ENCODE measurements at regions of chr16 and their contacts with region 1.

Region 1: GRCh38 chr16:19086322-19087199 is 19.1 kb downstream of the COQ7 start:
- DNase-seq: peak; percentile 95
- ATAC-seq: peak; percentile 98
- H3K4me3 ChIP-seq: peak overlapping the region; percentile 45 to 84 (median 47)
- H3K27ac ChIP-seq: no peak overlapping the region
- H3K4me1 ChIP-seq: peaks cover 15% of the 10 kb centered on the region
- H3K27me3 ChIP-seq: peaks cover 0 to 9% of the 10 kb centered on the region in 2 experiments; a peak in 2 of 5 replicates
- CTCF ChIP-seq: peak; percentile 100
- EP300 ChIP-seq: peak; percentile 28 to 80; a peak in 1 of 4 replicates
- POLR2A ChIP-seq: peak in 1 of 2 experiments; percentile 78; a peak in 2 of 4 replicates
- RAD21 ChIP-seq: peak; percentile 100

Region 2: GRCh38 chr16:19073863-19074262 is 12.7 kb before region 1 on chr16:
- CTCF ChIA-PET with region 1: no interaction called
- POLR2A ChIA-PET with region 1: no interaction called
- in situ Hi-C with region 1: no loop called
- intact Hi-C with region 1: no loop called
- DNase-seq: no peak
- ATAC-seq: no peak
- H3K4me3 ChIP-seq: no peak overlapping the region
- H3K27ac ChIP-seq: no peak overlapping the region
- H3K4me1 ChIP-seq: peaks cover 10% of the 10 kb centered on the region
- H3K27me3 ChIP-seq: no peaks in the 10 kb centered on the region
- CTCF ChIP-seq: no peak
- EP300 ChIP-seq: no peak
- POLR2A ChIP-seq: no peak
- RAD21 ChIP-seq: no peak

Region 3: DNA sequence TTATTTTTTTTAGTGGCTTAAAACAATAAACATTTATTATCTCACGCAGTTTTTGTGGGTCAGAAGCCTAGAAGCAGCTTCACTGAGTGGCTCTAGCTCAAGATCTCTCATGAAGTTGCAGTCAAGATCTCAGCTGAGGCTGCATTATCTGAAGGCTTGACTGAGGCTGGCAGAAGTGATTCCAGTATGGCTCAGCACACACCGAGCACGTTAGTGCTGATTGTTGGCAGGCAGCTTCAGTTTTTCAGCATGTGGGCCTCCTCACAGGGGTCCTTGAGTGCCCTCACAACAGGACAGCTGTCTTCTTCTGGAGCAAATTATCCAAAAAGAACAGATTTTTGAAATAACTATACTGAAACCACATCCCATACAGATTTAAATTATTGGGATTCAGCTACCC is 13.5 kb after region 1 on chr16:
- CTCF ChIA-PET with region 1: interaction called, 5 read pairs
- POLR2A ChIA-PET with region 1: interaction called, 15 read pairs
- in situ Hi-C with region 1: no loop called
- intact Hi-C with region 1: loop called (anchors 2 kb)
- DNase-seq: no peak
- ATAC-seq: no peak
- H3K4me3 ChIP-seq: no peak overlapping the region
- H3K27ac ChIP-seq: no peak overlapping the region
- H3K4me1 ChIP-seq: peaks cover 14% of the 10 kb centered on the region
- H3K27me3 ChIP-seq: peaks cover 2 to 12% of the 10 kb centered on the region in 2 experiments; a peak in 4 of 5 replicates
- CTCF ChIP-seq: no peak
- EP300 ChIP-seq: no peak
- POLR2A ChIP-seq: no peak
- RAD21 ChIP-seq: no peak

Region 4: GRCh38 chr16:19167710-19168370 is 81.3 kb after region 1 on chr16 and contains the start of gene SYT17:
- CTCF ChIA-PET with region 1: interaction called, 11 read pairs
- POLR2A ChIA-PET with region 1: no interaction called
- in situ Hi-C with region 1: no loop called
- intact Hi-C with region 1: no loop called
- DNase-seq: peak; percentile 60
- ATAC-seq: peak; percentile 94
- H3K4me3 ChIP-seq: peak within 1 kb of the TSS; percentile 25 to 65 (median 41); a peak in 4 of 6 replicates
- H3K27ac ChIP-seq: no peak within 1 kb of the TSS
- H3K4me1 ChIP-seq: no peaks in the 10 kb centered on the region
- H3K27me3 ChIP-seq: peaks cover 11 to 57% of the 10 kb centered on the region in 2 experiments; a peak in 4 of 5 replicates
- CTCF ChIP-seq: peak; percentile 82
- EP300 ChIP-seq: no peak
- POLR2A ChIP-seq: no peak
- RAD21 ChIP-seq: peak; percentile 97
- total RNA-seq, gene SYT17: 0.14 TPM in 1 of 2 replicates, not detected in the other

Region 5: DNA sequence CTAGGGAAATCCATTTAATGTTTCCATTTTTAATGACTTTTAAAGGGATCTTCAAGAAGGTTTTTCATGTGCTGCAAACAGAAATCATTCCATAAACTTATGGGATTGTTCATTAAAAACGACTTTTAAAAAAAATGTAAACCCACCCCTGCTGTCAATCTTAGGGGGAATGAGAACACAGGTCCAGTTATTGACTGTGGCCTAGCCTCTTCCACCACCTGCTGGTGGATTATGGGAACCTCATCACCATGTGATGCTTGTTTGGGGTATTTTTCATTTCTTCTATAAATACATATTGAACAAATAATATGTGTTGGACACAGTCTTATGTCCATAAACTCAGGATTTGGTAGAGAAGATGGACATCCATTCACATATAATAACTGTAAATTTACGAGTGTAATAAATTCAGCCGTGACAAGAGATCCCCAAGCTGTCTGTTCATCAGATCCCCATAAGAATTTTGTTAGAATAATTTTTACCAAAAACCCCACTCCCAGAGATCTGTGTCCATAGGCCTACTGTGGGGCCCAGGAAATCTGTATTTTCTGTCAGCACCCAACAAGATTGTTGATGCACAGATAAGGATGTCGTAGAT is 289.1 kb after region 1 on chr16:
- CTCF ChIA-PET with region 1: interaction called, 65 read pairs
- POLR2A ChIA-PET with region 1: no interaction called
- in situ Hi-C with region 1: loop called (anchors 5 kb)
- intact Hi-C with region 1: loop called (anchors 1 kb)
- DNase-seq: peak; percentile 60
- ATAC-seq: peak; percentile 83
- H3K4me3 ChIP-seq: no peak overlapping the region
- H3K27ac ChIP-seq: no peak overlapping the region
- H3K4me1 ChIP-seq: peaks cover 13% of the 10 kb centered on the region
- H3K27me3 ChIP-seq: 0 out of 5 replicates have a peak, but pooled peaks cover 1 to 4% of the 10 kb centered on the region in 2 experiments
- CTCF ChIP-seq: peak; percentile 92
- EP300 ChIP-seq: no peak
- POLR2A ChIP-seq: no peak
- RAD21 ChIP-seq: peak; percentile 90

Region 6: DNA sequence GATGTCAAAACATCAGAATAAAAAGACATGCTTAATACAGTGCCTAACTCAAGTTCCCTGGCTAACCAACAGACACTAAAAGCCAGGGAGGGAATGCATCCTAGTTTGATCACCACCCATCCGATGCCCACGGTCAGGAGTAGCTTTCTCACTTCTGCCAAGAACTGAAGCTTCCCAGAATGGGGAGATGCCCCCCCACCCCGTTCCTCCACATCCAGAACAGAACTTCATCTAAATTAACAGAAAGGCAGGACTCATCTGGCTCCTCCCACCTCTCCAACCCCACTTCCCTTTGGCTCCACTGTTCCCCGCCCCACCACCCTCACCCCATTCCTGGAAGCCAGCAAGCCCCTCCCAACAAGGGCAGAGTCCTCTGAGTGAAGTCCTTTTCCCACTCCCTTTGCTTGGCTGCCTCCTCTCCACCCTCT is 401.7 kb after region 1 on chr16:
- CTCF ChIA-PET with region 1: no interaction called
- POLR2A ChIA-PET with region 1: no interaction called
- in situ Hi-C with region 1: no loop called
- intact Hi-C with region 1: no loop called
- DNase-seq: no peak
- ATAC-seq: peak; percentile 68
- H3K4me3 ChIP-seq: peak overlapping the region in 1 of 3 experiments; percentile 25; a peak in 1 of 6 replicates
- H3K27ac ChIP-seq: no peak overlapping the region
- H3K4me1 ChIP-seq: peaks cover 14% of the 10 kb centered on the region
- H3K27me3 ChIP-seq: peaks cover 0 to 9% of the 10 kb centered on the region in 2 experiments; a peak in 1 of 5 replicates
- CTCF ChIP-seq: no peak
- EP300 ChIP-seq: no peak
- POLR2A ChIP-seq: no peak
- RAD21 ChIP-seq: no peak

Measured in HepG2 (cell line).